ENCODE measurements at regions of chr5 and their contacts with region 1.

Region 1: DNA sequence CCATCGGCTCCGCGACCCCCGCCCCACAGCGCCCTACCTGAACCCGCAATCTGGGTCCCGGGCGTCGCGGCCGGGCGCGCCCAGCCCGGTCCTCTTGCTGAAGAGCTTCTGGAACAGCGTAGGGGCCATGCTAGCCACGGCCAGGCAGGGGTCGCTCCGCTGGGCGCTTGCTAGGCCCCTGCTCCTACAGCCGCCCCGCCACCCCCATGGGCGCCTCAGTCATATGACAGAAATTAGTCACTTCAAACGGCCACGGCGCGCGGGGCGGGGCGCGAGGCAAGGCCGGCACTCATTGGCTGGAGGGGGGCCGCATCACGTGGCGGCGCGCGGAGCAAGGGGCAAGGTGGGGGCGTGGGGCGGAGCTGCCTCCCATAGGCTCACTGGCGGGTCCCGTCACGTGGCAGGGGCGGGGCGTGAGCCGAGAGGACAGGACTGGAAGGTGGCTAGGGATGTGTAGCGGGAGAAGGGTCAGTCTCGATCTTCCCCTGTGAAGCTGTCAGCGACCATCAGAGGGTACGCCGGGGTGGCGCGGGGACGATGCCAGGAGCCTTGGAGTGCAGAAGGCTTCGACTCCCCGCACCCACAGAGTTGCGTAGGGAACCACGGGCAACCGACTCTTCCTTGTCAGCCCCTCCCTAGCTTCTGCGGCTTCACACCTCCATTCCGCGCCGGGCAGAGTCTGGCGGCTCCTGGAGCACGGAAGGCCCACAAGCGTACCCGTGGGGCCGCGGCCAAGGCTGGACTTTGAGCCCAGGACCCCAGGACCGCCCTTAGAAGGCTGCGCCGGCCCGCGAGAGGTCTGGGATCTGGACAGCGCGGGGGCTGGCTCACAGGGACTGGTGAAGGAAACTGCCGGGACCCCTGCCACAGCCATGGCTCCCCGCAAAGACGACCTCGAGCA is at the start of gene FNIP1:
- DNase-seq: peak; percentile 99 to 100 (median 100)
- H3K4me3 ChIP-seq: peak within 1 kb of the TSS; percentile 68 to 100 (median 97)
- H3K27ac ChIP-seq: peak within 1 kb of the TSS; percentile 95 to 100 (median 99)
- H3K27me3 ChIP-seq: no peaks in the 10 kb centered on the region
- CTCF ChIP-seq: peak in 21 of 56 donors; percentile 8 to 46 (median 21)
- total RNA-seq, gene FNIP1: 40.0 to 84.5 (median 54.3) TPM

Region 2: GRCh38 chr5:131589510-131590348 is 207.3 kb before region 1 on chr5:
- intact Hi-C with region 1: loop called in 1 of 2 experiments (anchors 5 kb)
- DNase-seq: no peak
- H3K4me3 ChIP-seq: no peak overlapping the region
- H3K27ac ChIP-seq: peak overlapping the region in 46 of 59 donors; percentile 2 to 77 (median 48)
- H3K27me3 ChIP-seq: no peaks in the 10 kb centered on the region
- CTCF ChIP-seq: peak; percentile 68 to 97 (median 87)

Region 3: DNA sequence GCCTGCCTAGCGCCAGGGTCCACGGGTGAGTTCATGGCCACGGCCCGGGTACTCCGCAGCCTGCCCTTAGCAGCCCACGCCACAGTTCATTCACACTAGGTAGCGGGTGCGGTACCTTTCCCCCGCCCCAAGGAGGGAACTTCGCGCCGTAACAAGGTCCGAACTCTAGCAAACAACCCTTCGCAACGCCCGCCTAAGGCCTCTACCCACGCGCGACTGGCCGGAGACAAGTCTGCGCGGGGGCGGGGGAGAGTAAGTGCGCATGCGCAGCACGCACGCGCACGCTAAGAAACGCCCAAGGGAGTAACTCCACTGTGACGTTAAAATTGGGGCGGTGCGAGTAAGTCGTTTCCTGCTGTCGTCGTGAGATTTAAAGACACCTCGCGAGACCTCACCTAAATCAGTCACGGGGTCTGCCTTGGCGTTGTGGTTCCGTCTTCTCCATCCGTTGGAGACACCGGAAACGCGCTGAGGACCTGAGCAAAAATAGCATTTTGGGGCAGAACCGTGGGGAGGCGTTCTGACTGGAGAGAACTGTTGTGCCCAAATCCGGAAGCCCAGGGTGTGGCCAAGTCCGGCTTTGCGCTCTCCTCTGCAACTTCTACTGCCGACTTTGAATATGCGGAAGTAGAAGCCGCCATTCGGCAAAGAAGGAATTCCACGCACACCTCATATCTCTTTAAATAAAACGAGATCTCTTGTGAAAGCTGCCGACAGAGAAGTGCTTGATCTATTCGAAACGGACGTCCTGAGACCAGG is 161.9 kb before region 1 on chr5 and contains the start of gene RAPGEF6:
- intact Hi-C with region 1: loop called (anchors 2 kb)
- DNase-seq: peak; percentile 94 to 99 (median 97)
- H3K4me3 ChIP-seq: peak within 1 kb of the TSS; percentile 54 to 99 (median 88)
- H3K27ac ChIP-seq: peak within 1 kb of the TSS; percentile 89 to 100 (median 98)
- H3K27me3 ChIP-seq: no peaks in the 10 kb centered on the region
- CTCF ChIP-seq: peak in 14 of 56 donors; percentile 4 to 30 (median 19)
- total RNA-seq, gene RAPGEF6: 43.8 to 127 (median 73.9) TPM

Region 4: DNA sequence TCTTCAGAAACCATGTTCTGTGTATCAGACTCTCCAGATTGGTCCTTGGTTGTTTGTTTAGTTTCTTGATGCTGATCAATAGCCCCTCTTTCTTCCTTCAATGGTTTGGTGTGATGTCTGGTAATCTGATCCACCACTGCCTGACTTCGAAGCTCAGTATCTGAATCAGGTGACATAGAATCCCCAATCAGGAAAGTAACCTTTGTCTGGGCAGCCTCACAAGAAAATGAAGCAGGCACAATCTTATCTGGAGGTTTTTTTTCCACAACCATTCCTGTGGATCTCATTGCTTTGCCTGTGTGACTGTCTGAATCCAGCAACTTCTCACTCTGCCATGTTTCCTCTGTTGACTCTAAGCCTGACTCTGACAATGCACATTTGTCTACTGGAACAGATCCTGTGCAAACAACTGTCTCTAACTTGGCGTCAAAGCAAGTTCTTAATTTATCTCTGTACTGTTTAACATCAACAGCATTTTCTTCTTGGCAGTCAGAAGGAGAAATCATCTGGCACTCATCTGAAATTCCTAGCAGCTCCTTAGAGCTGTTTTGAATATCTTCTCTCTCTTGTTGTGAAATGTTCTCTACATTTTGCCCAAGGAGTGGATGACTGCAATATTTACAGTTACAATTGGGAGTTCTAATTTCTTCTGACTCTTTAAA is 124.9 kb before region 1 on chr5:
- intact Hi-C with region 1: loop called (anchors 10 kb)
- DNase-seq: peak in 1 of 10 donors; percentile 40
- H3K4me3 ChIP-seq: peak overlapping the region in 13 of 59 donors; percentile 4 to 34 (median 18)
- H3K27ac ChIP-seq: peak overlapping the region; percentile 61 to 96 (median 91)
- H3K27me3 ChIP-seq: no peaks in the 10 kb centered on the region
- CTCF ChIP-seq: peak in 1 of 56 donors; percentile 9

Region 5: DNA sequence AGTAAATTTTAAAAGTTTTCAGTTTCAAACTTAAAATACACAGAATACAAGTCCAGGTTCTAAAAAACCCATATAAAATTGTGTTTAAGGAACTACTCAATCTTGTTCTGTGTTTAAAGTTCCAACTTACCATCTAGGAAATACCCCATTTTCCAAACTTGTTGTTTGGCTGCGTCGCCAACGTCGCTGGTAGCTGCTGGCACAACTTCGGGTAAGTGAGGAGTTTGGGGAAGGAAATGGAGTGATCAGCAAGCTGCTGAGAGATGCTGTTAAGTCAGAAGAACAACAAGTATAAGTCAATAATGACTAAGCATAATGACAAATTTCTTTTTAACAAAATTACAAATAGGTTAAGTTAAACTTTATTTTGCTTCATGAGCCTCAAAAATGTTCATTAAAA is 90.8 kb before region 1 on chr5:
- intact Hi-C with region 1: loop called in 1 of 2 experiments (anchors 5 kb)
- DNase-seq: no peak
- H3K4me3 ChIP-seq: no peak overlapping the region
- H3K27ac ChIP-seq: peak overlapping the region in 17 of 59 donors; percentile 4 to 54 (median 21)
- H3K27me3 ChIP-seq: no peaks in the 10 kb centered on the region
- CTCF ChIP-seq: no peak

Region 6: GRCh38 chr5:131773805-131774204 is 23.2 kb before region 1 on chr5:
- intact Hi-C with region 1: loop called in 1 of 2 experiments (anchors 2 kb)
- DNase-seq: peak in 7 of 10 donors; percentile 17 to 80 (median 46)
- H3K4me3 ChIP-seq: peak overlapping the region in 1 of 59 donors; percentile 6
- H3K27ac ChIP-seq: peak overlapping the region in 57 of 59 donors; percentile 3 to 93 (median 73)
- H3K27me3 ChIP-seq: no peaks in the 10 kb centered on the region
- CTCF ChIP-seq: peak in 2 of 56 donors; percentile 8 to 24